ENCODE measurements at regions of chr19 and their contacts with region 1.

Region 1: DNA sequence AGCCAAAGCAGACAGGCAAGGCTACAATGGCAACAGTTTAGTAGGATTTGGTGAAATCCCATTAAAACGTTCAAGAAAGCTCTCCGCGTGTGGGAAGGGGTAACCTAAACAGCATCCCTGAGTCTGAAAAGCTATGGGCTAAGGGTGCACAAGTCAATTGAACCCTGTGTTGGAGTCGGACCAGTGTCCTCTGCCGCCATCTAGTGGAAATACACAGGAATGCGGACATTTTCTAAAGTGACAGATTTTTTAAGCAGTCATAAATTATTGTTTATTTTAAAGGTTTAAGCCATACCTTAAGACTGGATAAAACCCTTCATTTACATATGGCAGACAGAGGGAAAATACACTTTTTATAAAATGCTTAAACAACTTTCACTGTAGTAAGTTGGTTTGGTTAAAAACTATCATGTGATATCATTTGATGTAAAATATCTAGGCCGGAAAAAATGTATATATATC is 26.5 kb upstream of the LSM14A start:
- DNase-seq: no peak
- ATAC-seq: peak; percentile 76
- H3K4me3 ChIP-seq: no peak overlapping the region
- H3K27ac ChIP-seq: no peak overlapping the region
- H3K4me1 ChIP-seq: no peaks in the 10 kb centered on the region
- H3K27me3 ChIP-seq: no peaks in the 10 kb centered on the region
- CTCF ChIP-seq: peak; percentile 97

Region 2: DNA sequence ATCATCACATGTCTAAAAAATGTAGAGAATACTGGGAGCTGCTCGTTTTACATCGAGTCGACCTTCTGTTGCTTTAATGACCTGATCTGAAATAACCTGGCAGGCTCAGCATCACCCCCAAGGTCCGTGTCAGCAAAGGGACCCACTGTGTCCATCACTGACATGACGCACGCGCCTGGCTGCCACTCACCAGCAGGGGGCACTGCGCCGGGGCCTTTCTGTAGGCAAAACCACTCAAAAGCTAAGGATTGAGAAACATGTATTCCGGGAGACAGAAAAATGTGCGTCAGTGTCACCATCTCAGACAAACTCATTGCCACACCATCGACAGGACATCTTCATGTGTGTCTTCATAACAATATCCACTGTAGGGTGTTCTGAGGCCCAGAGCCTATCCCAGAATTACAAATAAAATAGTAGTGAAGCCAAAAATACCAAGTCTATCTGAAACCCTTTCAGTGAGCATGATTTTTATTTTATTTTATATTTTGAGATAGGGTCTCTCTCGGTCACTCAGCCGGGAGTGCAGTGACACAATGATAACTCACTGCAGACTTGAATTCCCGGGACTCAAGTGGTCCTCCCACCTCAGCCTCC is 103.7 kb before region 1 on chr19:
- CTCF ChIA-PET with region 1: no interaction called
- POLR2A ChIA-PET with region 1: no interaction called
- in situ Hi-C with region 1: no loop called
- intact Hi-C with region 1: loop called (anchors 10 kb)
- DNase-seq: peak; percentile 24
- ATAC-seq: peak; percentile 92
- H3K4me3 ChIP-seq: no peak overlapping the region
- H3K27ac ChIP-seq: no peak overlapping the region
- H3K4me1 ChIP-seq: no peaks in the 10 kb centered on the region
- H3K27me3 ChIP-seq: no peaks in the 10 kb centered on the region
- CTCF ChIP-seq: peak; percentile 98

Region 3: GRCh38 chr19:34744896-34745690 is 599.3 kb after region 1 on chr19:
- CTCF ChIA-PET with region 1: no interaction called
- POLR2A ChIA-PET with region 1: no interaction called
- in situ Hi-C with region 1: no loop called
- intact Hi-C with region 1: no loop called
- DNase-seq: no peak
- ATAC-seq: no peak
- H3K4me3 ChIP-seq: no peak overlapping the region
- H3K27ac ChIP-seq: no peak overlapping the region
- H3K4me1 ChIP-seq: no peaks in the 10 kb centered on the region
- H3K27me3 ChIP-seq: no peaks in the 10 kb centered on the region
- CTCF ChIP-seq: no peak